IMR-90 (cell line): ENCODE measurements at regions of chr6 and their contacts with region 1.

Region 1: GRCh38 chr6:158060455-158061360 is 79.0 kb downstream of the SYNJ2 start:
- DNase-seq: peak; percentile 94
- ATAC-seq: peak; percentile 79
- H3K4me3 ChIP-seq: no peak overlapping the region
- H3K27ac ChIP-seq: peak overlapping the region; percentile 74
- H3K4me1 ChIP-seq: peaks cover 35% of the 10 kb centered on the region
- H3K27me3 ChIP-seq: no peaks in the 10 kb centered on the region
- CTCF ChIP-seq: no peak
- POLR2A ChIP-seq: 0 out of 2 replicates have a peak, but pooled peaks have one; percentile 66
- RAD21 ChIP-seq: peak; percentile 15; the same call in 1 of the 2 replicates

Region 2: GRCh38 chr6:157713451-157714152 is 347.1 kb before region 1 on chr6:
- CTCF ChIA-PET with region 1: no interaction called
- POLR2A ChIA-PET with region 1: interaction called, 10 read pairs
- dilution Hi-C with region 1: no loop called
- in situ Hi-C with region 1: no loop called
- intact Hi-C with region 1: no loop called
- DNase-seq: no peak
- ATAC-seq: no peak
- H3K4me3 ChIP-seq: no peak overlapping the region
- H3K27ac ChIP-seq: no peak overlapping the region
- H3K4me1 ChIP-seq: peaks cover 22% of the 10 kb centered on the region
- H3K27me3 ChIP-seq: no peaks in the 10 kb centered on the region; the same call in 1 of the 2 replicates
- CTCF ChIP-seq: no peak
- POLR2A ChIP-seq: no peak
- RAD21 ChIP-seq: no peak

Region 3: GRCh38 chr6:157981395-157982296 is 79.1 kb before region 1 on chr6 and contains the start of gene SYNJ2:
- CTCF ChIA-PET with region 1: no interaction called
- POLR2A ChIA-PET with region 1: no interaction called
- dilution Hi-C with region 1: no loop called
- in situ Hi-C with region 1: no loop called
- intact Hi-C with region 1: loop called (anchors 2 kb)
- DNase-seq: peak; percentile 83
- ATAC-seq: peak; percentile 92
- H3K4me3 ChIP-seq: peak within 1 kb of the TSS; percentile 73
- H3K27ac ChIP-seq: peak within 1 kb of the TSS; percentile 65
- H3K4me1 ChIP-seq: peaks cover 31% of the 10 kb centered on the region
- H3K27me3 ChIP-seq: no peaks in the 10 kb centered on the region
- CTCF ChIP-seq: peak; percentile 47
- POLR2A ChIP-seq: peak; percentile 78
- RAD21 ChIP-seq: 0 out of 2 replicates have a peak, but pooled peaks have one; percentile 2
- total RNA-seq, gene SYNJ2: 43.3 and 45.2 TPM in 2 replicates